ENCODE measurements at regions of chr10 and their contacts with region 1.

Region 1: GRCh38 chr10:80487791-80488538 is 33.9 kb downstream of the TSPAN14 start:
- DNase-seq: peak; percentile 92
- ATAC-seq: peak; percentile 71
- H3K4me3 Mint-ChIP-seq: peak overlapping the region; percentile 66
- H3K27ac Mint-ChIP-seq: peak overlapping the region; percentile 90
- H3K4me1 Mint-ChIP-seq: peaks cover 97% of the 10 kb centered on the region
- H3K27me3 Mint-ChIP-seq: no peaks in the 10 kb centered on the region

Region 2: DNA sequence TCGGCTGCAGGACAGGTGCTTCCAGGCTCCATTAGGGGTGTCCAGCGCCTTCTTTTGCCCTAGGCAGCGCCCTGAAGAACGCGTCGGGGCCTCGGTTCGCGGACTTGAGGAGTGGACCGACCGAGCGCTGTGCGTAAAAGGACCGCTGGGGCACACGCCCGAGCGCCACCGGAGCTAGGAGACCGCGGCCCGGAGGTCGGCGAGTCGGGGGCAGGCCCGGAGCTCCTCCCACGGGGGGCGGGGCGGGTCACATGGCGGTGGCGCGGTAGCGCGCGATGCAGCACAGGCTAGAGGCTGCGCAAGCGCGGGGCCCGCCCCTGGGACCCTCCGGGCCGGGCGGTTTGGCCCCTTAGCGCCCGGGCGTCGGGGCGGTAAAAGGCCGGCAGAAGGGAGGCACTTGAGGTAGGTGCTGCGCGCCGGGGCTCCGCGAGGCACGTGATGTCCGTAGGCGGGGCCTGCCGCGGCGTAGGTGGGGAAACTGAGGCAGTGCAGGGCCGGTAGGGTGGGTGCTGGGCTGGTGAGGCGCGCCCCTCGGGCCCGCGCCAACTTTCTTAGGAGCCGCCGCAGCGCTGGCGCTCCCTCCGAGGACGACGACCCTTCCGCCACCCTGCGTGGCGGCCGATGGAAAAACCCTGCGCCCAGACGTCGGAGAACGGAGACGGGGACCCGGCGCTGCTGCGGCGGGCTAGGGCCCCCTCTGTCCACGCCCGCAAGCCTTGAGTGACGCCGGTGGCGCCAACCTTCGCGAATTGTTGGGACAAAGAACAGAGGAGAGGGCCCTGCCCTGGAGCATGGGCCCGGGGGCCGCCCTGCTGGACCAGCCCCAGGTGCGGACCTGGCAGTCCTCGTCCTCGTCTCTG is 79.5 kb before region 1 on chr10 and contains the start of gene PRXL2A:
- CTCF ChIA-PET with region 1: no interaction called
- DNase-seq: peak; percentile 87
- ATAC-seq: peak; percentile 99
- H3K4me3 Mint-ChIP-seq: peak within 1 kb of the TSS; percentile 69
- H3K27ac Mint-ChIP-seq: no peak within 1 kb of the TSS
- H3K4me1 Mint-ChIP-seq: peaks cover 11% of the 10 kb centered on the region
- H3K27me3 Mint-ChIP-seq: peaks cover 19% of the 10 kb centered on the region
- total RNA-seq, gene PRXL2A: 8.1 to 12.2 TPM

Region 3: GRCh38 chr10:80459047-80459931 is 28.7 kb before region 1 on chr10:
- CTCF ChIA-PET with region 1: interaction called, 65 read pairs
- DNase-seq: peak; percentile 93
- ATAC-seq: peak; percentile 57
- H3K4me3 Mint-ChIP-seq: peak overlapping the region; percentile 92
- H3K27ac Mint-ChIP-seq: peak overlapping the region; percentile 94
- H3K4me1 Mint-ChIP-seq: peaks cover 85% of the 10 kb centered on the region
- H3K27me3 Mint-ChIP-seq: no peaks in the 10 kb centered on the region

Region 4: GRCh38 chr10:80464557-80465450 is 23.2 kb before region 1 on chr10:
- CTCF ChIA-PET with region 1: interaction called, 65 read pairs
- DNase-seq: peak; percentile 44
- ATAC-seq: no peak
- H3K4me3 Mint-ChIP-seq: peak overlapping the region; percentile 67
- H3K27ac Mint-ChIP-seq: peak overlapping the region; percentile 84
- H3K4me1 Mint-ChIP-seq: peaks cover 98% of the 10 kb centered on the region
- H3K27me3 Mint-ChIP-seq: no peaks in the 10 kb centered on the region

Region 5: DNA sequence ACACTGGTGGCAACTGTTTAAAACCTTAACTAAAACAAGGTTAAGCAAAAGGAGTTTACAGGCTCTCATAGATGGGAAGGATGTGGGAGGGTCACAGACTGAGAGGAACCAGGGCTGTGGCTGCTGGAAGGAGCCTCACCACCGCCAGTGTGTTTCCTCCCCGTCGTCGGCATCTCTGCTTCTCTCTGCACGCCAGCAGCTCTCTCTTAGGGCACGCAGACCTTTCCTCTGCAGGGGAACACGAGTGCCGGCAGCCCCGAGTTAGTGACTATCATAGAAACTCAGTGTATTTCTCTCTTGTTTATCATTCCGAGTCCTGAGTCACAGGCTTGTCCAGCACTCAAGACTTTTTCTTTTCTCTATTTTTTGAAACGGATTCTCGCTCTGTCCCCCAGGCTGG is 41.6 kb after region 1 on chr10:
- CTCF ChIA-PET with region 1: no interaction called
- DNase-seq: peak; percentile 86
- ATAC-seq: peak; percentile 78
- H3K4me3 Mint-ChIP-seq: peak overlapping the region; percentile 44
- H3K27ac Mint-ChIP-seq: peak overlapping the region; percentile 93
- H3K4me1 Mint-ChIP-seq: peaks cover 75% of the 10 kb centered on the region
- H3K27me3 Mint-ChIP-seq: no peaks in the 10 kb centered on the region

Region 6: GRCh38 chr10:80555415-80555814 is 67.5 kb after region 1 on chr10:
- CTCF ChIA-PET with region 1: no interaction called
- DNase-seq: no peak
- ATAC-seq: no peak
- H3K4me3 Mint-ChIP-seq: no peak overlapping the region
- H3K27ac Mint-ChIP-seq: no peak overlapping the region
- H3K4me1 Mint-ChIP-seq: no peaks in the 10 kb centered on the region
- H3K27me3 Mint-ChIP-seq: peaks cover 22% of the 10 kb centered on the region